MCF 10A (cell line): ENCODE measurements at regions of chr12 and their contacts with region 1.

Region 1: GRCh38 chr12:12032851-12033588 is 37.7 kb upstream of the BCL2L14 start:
- DNase-seq: peak; percentile 84
- H3K4me3 Mint-ChIP-seq: no peak overlapping the region
- H3K27ac Mint-ChIP-seq: no peak overlapping the region
- H3K4me1 Mint-ChIP-seq: peaks cover 5% of the 10 kb centered on the region
- H3K27me3 Mint-ChIP-seq: no peaks in the 10 kb centered on the region
- CTCF ChIP-seq: peak; percentile 85

Region 2: DNA sequence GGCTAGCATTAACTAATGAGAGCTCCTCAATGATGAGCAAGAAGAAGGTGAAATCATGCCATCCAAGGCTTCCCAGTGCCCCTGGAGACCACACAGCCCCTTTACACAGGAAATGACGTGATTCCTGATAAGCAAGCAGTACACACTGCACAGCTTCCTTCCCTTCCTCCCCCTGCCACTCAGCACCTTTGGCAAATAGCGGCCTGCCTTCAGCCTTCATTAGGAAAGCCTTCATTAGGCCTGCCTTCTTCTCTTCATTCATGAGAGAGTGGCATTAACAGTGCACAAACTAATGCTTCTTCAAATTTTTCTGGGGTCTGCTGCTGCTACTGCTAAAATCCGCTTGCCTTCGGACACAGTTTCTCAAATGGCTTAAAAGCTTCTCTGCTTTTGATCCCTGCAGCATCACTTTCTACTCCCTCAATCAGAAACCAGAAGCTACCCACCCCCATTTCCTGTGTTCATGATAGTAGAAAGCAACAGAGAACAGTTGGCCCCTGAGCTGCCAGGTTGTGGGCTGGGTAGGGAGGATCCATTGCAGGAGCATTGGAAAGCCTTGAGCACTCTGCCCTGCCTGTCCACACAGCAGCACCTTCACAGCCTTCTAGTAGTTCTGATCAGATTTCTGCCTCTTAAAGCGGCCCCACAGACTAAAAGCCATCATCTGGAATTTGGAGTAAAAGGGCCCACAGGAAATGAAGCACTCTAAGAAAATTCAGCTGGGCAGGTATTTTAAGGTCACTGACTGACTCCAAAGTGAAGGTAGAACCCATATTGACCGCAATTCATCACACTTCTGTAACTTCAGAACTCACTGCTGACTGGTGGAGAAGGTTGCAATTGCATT is 487.3 kb before region 1 on chr12:
- CTCF ChIA-PET with region 1: interaction called, 10 read pairs
- POLR2A ChIA-PET with region 1: no interaction called
- intact Hi-C with region 1: no loop called
- DNase-seq: no peak
- H3K4me3 Mint-ChIP-seq: no peak overlapping the region
- H3K27ac Mint-ChIP-seq: no peak overlapping the region
- H3K4me1 Mint-ChIP-seq: no peaks in the 10 kb centered on the region
- H3K27me3 Mint-ChIP-seq: peaks cover 17% of the 10 kb centered on the region
- CTCF ChIP-seq: no peak

Region 3: GRCh38 chr12:11553871-11554533 is 479.0 kb before region 1 on chr12:
- CTCF ChIA-PET with region 1: interaction called, 28 read pairs
- POLR2A ChIA-PET with region 1: no interaction called
- intact Hi-C with region 1: loop called (anchors 1 kb)
- DNase-seq: peak; percentile 78
- H3K4me3 Mint-ChIP-seq: no peak overlapping the region
- H3K27ac Mint-ChIP-seq: no peak overlapping the region
- H3K4me1 Mint-ChIP-seq: peaks cover 11% of the 10 kb centered on the region
- H3K27me3 Mint-ChIP-seq: peaks cover 57% of the 10 kb centered on the region
- CTCF ChIP-seq: peak; percentile 59

Region 4: DNA sequence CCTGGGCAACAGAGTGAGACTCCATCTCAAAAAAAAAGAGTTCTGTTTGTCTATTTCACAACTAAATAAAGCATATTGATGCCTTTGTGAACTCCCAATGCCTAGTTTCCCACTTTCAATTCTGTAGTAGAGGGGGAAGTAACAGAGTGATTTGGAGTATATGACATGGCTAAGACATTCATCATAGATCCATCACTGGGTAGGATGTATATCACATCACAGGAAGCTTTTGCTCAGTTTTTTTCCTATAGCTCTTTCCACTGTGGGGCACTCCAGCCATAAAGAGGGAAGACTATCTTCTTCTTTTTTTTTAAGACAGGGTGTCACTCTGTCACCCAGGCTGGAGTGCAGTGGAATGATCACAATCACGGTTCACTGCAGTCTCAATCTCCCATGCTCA is 116.2 kb before region 1 on chr12:
- CTCF ChIA-PET with region 1: no interaction called
- POLR2A ChIA-PET with region 1: no interaction called
- intact Hi-C with region 1: no loop called
- DNase-seq: no peak
- H3K4me3 Mint-ChIP-seq: no peak overlapping the region
- H3K27ac Mint-ChIP-seq: no peak overlapping the region
- H3K4me1 Mint-ChIP-seq: no peaks in the 10 kb centered on the region
- H3K27me3 Mint-ChIP-seq: peaks cover 32% of the 10 kb centered on the region
- CTCF ChIP-seq: no peak

Region 5: DNA sequence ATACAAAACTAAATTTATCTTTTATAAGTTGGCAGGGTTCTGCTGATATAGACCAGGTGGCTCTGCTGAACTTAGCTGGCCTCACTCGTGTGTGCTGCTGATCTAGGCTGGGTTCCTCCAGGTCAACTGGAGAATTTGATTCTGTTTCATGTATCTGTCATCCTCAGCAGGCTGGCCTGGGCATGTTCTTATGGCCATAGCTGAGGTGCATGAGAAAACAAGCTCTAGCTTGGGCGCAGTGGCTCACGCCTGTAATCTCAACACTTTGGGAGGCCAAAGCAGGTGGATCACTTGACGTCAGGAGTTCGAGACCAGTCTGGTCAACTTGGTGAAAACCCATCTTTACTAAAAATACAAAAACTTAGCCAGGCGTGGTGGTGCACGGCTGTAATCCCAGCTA is 13.4 kb after region 1 on chr12:
- CTCF ChIA-PET with region 1: interaction called, 13 read pairs
- POLR2A ChIA-PET with region 1: no interaction called
- intact Hi-C with region 1: no loop called
- DNase-seq: no peak
- H3K4me3 Mint-ChIP-seq: no peak overlapping the region
- H3K27ac Mint-ChIP-seq: no peak overlapping the region
- H3K4me1 Mint-ChIP-seq: no peaks in the 10 kb centered on the region
- H3K27me3 Mint-ChIP-seq: no peaks in the 10 kb centered on the region
- CTCF ChIP-seq: no peak

Region 6: DNA sequence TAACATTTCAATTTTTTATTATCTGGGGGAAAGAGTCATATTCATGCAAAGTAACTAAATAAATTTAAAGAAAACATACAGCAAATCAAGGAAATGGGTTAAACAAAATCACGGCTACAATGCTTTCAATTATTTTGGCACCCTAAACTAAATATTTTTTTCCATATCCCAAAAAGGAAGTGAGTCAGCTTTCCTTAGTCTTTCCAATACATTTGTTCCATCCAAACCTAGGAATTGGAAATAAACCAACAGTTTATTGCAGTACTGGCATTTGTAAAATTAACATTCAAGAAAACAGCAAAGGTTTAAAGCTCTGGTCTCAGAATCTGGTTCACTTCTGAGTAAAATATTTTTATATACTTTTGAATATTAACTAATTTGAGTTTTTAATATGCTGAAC is 127.0 kb after region 1 on chr12:
- CTCF ChIA-PET with region 1: no interaction called
- POLR2A ChIA-PET with region 1: no interaction called
- intact Hi-C with region 1: no loop called
- DNase-seq: peak; percentile 29
- H3K4me3 Mint-ChIP-seq: no peak overlapping the region
- H3K27ac Mint-ChIP-seq: peak overlapping the region; percentile 1
- H3K4me1 Mint-ChIP-seq: peaks cover 9% of the 10 kb centered on the region
- H3K27me3 Mint-ChIP-seq: no peaks in the 10 kb centered on the region
- CTCF ChIP-seq: no peak

Region 7: GRCh38 chr12:12349711-12350665 is 317.0 kb after region 1 on chr12 and contains the start of gene MANSC1:
- CTCF ChIA-PET with region 1: no interaction called
- POLR2A ChIA-PET with region 1: no interaction called
- intact Hi-C with region 1: no loop called
- DNase-seq: no peak
- H3K4me3 Mint-ChIP-seq: peak within 1 kb of the TSS; percentile 59
- H3K27ac Mint-ChIP-seq: no peak within 1 kb of the TSS
- H3K4me1 Mint-ChIP-seq: no peaks in the 10 kb centered on the region
- H3K27me3 Mint-ChIP-seq: no peaks in the 10 kb centered on the region
- CTCF ChIP-seq: peak; percentile 36
- total RNA-seq, gene MANSC1: 9.9 and 10.1 TPM in 2 replicates